Gastrocnemius medialis (tissue), 4 donors: ENCODE measurements at regions of chr22 and their contacts with region 1.

Region 1: DNA sequence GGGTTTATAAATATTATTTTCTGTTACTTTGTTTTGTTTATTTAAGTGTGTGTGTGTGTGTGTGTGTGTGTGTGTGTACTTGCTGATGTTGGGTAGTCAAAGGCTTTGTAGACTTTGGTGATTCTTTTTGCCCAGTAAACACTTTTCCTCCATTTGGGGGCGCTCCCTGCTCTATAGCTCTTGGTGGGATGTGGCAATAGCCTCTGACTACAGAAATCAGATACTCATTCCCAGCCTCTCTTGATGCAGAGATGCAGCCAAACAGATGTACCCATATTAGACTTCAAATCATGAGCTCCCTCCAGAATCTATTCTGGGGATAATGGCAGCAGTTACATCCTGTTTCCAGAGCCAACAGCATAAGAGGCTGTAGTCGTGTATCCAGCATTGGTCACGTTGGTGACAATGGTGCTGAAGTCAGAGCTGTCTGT is 33.4 kb upstream of the APOL5 start:
- DNase-seq: peak; percentile 71 to 81
- ATAC-seq: peak; percentile 93 to 97
- H3K4me3 ChIP-seq: no peak overlapping the region
- H3K27ac ChIP-seq: peak overlapping the region; percentile 74 to 94 (median 90)
- H3K4me1 ChIP-seq: peaks cover 28 to 31% of the 10 kb centered on the region in 2 donors
- H3K27me3 ChIP-seq: no peaks in the 10 kb centered on the region
- CTCF ChIP-seq: peak in 4 of 5 experiments; percentile 40 to 53 (median 49)
- POLR2A ChIP-seq: no peak

Region 2: DNA sequence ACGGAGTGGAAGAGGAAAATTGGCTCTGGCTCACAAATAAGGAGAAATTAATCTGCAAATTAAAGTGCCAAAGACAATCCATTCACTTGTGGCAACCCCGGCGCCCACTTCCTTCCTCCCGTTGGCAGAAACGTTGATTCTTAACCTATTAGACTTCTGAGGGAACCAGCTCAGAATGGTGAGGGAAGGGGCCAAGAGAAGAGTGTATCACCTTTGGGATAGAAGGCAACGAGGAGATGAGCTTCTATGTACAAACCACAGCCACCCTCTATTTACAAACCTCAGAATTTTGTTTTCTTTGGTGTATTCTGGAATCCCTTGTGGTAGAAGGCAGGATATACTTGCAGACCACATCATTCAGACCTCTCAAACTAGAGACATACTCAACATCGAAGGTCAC is 68.2 kb before region 1 on chr22:
- in situ Hi-C with region 1: no loop called
- intact Hi-C with region 1: no loop called
- DNase-seq: no peak
- ATAC-seq: no peak
- H3K4me3 ChIP-seq: peak overlapping the region; percentile 40 to 56 (median 50)
- H3K27ac ChIP-seq: peak overlapping the region; percentile 92 to 97 (median 97)
- H3K4me1 ChIP-seq: peaks cover 72% of the 10 kb centered on the region in 2 donors
- H3K27me3 ChIP-seq: no peaks in the 10 kb centered on the region
- CTCF ChIP-seq: no peak
- POLR2A ChIP-seq: no peak

Region 3: GRCh38 chr22:35728639-35729308 is 44.5 kb after region 1 on chr22:
- in situ Hi-C with region 1: no loop called
- intact Hi-C with region 1: loop called (anchors 5 kb)
- DNase-seq: no peak
- ATAC-seq: no peak
- H3K4me3 ChIP-seq: no peak overlapping the region
- H3K27ac ChIP-seq: no peak overlapping the region
- H3K4me1 ChIP-seq: peaks cover 2 to 6% of the 10 kb centered on the region in 2 donors
- H3K27me3 ChIP-seq: no peaks in the 10 kb centered on the region
- CTCF ChIP-seq: no peak
- POLR2A ChIP-seq: no peak

Region 4: DNA sequence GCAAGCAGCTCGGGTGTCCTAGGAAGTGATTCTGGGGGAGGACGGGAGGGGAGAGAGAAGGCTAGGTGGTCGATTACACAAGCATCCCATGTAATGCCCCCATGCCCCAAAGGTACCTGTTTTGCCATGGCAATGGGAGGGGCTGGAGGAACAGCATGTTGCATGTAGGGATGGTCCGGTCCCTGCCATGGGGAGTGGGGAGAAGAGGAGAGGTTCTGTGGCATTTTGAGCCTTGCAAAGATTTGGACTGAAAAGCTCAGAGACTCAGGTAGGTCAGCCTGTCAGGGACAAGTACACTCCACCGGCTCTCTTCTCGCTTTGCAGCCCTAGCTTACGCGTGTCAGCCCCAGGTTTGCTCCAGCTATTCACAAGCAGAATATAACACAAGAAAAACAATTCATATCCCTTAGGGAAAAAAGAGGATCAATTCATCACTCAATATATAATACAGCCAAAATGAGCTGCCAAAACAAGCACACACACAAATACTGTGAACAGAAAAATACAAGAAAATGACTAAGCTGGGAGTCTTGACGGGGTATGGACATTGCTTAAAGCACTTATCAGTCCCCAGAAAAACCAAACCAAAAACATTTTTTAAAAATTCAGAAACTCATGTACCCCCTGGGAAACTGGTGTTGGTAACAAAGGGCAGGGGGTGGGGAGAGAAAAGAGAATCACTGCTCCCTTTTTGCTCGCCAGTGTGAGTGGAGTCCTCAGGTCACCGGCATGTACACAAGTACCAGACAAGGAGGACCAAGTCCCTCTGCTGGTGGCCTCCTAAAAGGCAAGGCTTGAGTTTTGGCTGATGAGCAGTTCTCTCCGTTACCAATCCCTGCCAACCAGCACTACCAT is 55.0 kb after region 1 on chr22:
- in situ Hi-C with region 1: no loop called
- intact Hi-C with region 1: loop called (anchors 1 kb)
- DNase-seq: peak in 1 of 2 donors; percentile 48
- ATAC-seq: peak; percentile 28 to 35
- H3K4me3 ChIP-seq: no peak overlapping the region
- H3K27ac ChIP-seq: peak overlapping the region; percentile 46 to 87 (median 82)
- H3K4me1 ChIP-seq: peaks cover 45 to 46% of the 10 kb centered on the region in 2 donors
- H3K27me3 ChIP-seq: no peaks in the 10 kb centered on the region
- CTCF ChIP-seq: peak in 4 of 5 experiments; percentile 22 to 62 (median 42)
- POLR2A ChIP-seq: no peak

Region 5: DNA sequence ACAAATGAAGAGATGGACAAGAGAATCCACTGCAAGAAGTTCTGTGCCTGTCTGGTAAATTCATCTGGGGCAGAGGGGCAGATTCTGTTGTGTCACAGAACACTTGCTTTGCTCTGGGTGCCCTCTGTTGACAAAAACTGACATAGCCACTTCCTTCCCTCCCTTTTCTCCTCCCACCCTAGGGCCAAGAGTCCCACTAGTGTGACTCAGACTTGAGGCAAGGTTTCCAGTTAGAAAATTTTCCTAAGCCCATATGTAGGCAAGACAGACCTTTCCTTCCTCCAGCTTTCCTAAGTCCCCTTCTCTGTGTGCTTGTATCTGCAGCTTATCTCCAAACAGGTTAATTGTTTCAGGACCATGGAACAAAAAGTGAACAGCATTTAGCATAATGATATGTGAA is 237.5 kb after region 1 on chr22:
- in situ Hi-C with region 1: loop called in 2 of 4 experiments (anchors 5 kb)
- intact Hi-C with region 1: loop called (anchors 1 kb)
- DNase-seq: peak; percentile 50 to 82
- ATAC-seq: peak; percentile 93 to 99
- H3K4me3 ChIP-seq: no peak overlapping the region
- H3K27ac ChIP-seq: peak overlapping the region; percentile 55 to 79 (median 62)
- H3K4me1 ChIP-seq: peaks cover 37 to 49% of the 10 kb centered on the region in 2 donors
- H3K27me3 ChIP-seq: no peaks in the 10 kb centered on the region
- CTCF ChIP-seq: peak; percentile 40 to 79 (median 66)
- POLR2A ChIP-seq: no peak

Region 6: DNA sequence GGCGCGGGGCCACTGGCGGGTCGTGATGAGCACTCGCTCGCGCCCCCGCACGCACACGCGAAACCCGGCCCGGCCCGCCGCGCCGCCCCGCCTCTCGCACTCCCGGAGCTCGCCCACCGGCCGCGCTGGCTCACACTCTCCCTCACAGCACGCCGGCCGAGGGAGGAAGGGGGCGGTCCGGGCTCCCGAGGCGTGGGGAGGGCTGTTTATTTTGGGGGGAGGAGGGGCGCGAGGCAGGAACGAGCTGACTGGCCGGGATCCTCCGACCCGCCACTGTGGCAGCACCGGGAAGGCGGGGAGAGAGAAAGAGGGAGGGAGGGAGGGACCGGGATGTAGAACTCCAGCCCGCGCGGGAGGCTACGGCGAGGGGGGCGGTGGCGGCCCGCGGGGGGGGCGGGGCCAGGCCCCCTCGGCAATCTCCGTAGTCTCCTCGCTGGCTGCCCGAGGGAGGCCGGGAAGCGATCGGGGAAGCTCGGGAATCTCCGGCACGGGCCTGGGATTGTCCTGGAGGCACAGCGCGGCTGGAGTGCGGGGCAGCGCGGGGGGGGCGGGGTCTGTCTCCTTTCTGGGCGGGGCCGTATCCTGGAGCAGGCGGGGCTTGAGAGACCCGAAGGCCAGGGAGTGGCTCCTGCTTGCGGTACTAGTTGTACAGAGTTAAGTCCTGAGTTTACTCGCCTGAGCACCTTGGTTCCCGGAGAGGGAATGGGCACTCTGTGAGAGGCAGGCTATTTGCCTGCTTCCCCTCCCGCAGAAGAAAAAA is 344.5 kb after region 1 on chr22 and contains the start of gene RBFOX2:
- in situ Hi-C with region 1: no loop called
- intact Hi-C with region 1: loop called (anchors 5 kb)
- DNase-seq: peak; percentile 96 to 97
- ATAC-seq: peak; percentile 90 to 91
- H3K4me3 ChIP-seq: peak within 1 kb of the TSS; percentile 72 to 80 (median 74)
- H3K27ac ChIP-seq: peak within 1 kb of the TSS; percentile 83 to 92 (median 86)
- H3K4me1 ChIP-seq: peaks cover 13 to 15% of the 10 kb centered on the region in 2 donors
- H3K27me3 ChIP-seq: no peaks in the 10 kb centered on the region
- CTCF ChIP-seq: no peak
- POLR2A ChIP-seq: peak; percentile 56 to 67
- total RNA-seq, gene RBFOX2: 26.0 to 32.1 (median 28.6) TPM